PC-9 (cell line): ENCODE measurements at regions of chr14 and their contacts with region 1.

Region 1: GRCh38 chr14:75982266-75983018 is 647 bp upstream of the TGFB3 start:
- DNase-seq: peak; percentile 71 to 96
- H3K4me3 ChIP-seq: peak overlapping the region; percentile 85
- H3K27ac ChIP-seq: no peak overlapping the region
- H3K4me1 ChIP-seq: peaks cover 37% of the 10 kb centered on the region
- H3K27me3 ChIP-seq: no peaks in the 10 kb centered on the region
- CTCF ChIP-seq: peak; percentile 79

Region 2: DNA sequence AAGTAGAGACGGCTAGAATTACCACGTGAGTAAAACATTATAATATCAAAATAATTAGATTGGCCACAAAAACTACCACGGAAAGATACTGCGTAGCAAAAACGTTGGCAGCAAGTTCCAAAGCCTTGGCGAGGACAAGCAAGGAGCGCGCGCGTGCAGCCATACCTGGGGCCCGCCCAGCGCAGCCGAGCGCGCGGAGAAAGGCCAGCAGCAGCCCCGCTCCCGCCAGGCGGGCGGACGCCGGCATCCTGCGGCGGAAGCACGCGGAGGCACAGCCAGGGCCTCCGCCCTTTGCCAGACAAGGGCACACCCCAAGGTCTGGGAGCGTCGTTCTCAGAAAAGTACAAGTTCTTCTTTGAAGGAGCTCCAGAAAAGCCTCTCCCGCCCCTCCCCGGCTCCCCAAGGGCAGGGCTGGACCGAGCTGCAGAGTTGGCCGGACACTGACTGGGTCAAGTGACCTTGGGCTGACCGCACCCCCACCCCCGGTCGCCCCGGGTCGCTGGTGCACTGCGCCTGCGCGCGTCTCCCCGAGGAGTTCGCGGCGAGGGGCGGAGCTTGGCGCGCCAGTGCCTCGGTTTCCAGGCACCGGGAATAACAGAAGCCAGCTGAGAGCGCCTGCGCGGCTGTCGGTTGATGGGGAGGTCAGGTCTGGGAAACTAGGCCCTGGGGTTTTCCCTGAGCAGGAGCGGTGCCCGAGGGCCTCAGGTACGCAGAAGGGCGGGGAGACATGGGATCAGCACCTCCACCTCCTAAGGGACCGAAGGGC is 913.2 kb before region 1 on chr14 and contains the start of gene ZC2HC1C:
- CTCF ChIA-PET with region 1: interaction called, 12 read pairs
- POLR2A ChIA-PET with region 1: no interaction called
- intact Hi-C with region 1: no loop called
- DNase-seq: peak; percentile 94 to 100
- H3K4me3 ChIP-seq: peak within 1 kb of the TSS; percentile 71
- H3K27ac ChIP-seq: peak within 1 kb of the TSS; percentile 79
- H3K4me1 ChIP-seq: peaks cover 32% of the 10 kb centered on the region
- H3K27me3 ChIP-seq: no peaks in the 10 kb centered on the region
- CTCF ChIP-seq: no peak
- total RNA-seq, gene ZC2HC1C: 11.9 and 13.8 TPM in 2 replicates

Region 3: GRCh38 chr14:75487155-75487671 is 495.2 kb before region 1 on chr14:
- CTCF ChIA-PET with region 1: interaction called, 11 read pairs
- POLR2A ChIA-PET with region 1: no interaction called
- intact Hi-C with region 1: loop called (anchors 1 kb)
- DNase-seq: peak; percentile 83 to 99
- H3K4me3 ChIP-seq: no peak overlapping the region
- H3K27ac ChIP-seq: 0 out of 2 replicates have a peak overlapping the region, but pooled peaks have one; percentile 5
- H3K4me1 ChIP-seq: peaks cover 18% of the 10 kb centered on the region
- H3K27me3 ChIP-seq: no peaks in the 10 kb centered on the region
- CTCF ChIP-seq: no peak

Region 4: DNA sequence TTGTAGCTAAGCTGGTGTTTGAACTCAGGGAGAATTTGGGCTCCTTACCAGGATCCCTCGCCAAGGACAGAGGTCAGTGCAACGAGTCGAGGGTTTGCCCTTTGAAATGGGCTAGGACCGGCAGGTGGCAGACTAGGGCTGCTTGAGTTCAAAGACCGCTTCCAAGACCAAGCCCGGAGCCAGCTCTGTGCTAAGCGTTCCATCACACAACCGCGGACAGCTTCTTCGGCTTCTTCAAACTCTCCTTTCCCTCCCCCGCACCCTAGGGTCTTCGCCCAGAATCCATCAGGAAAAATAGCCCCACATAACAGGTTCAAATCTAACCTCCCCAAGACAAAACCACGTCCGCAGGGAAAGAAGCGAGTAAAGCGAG is 404.7 kb before region 1 on chr14:
- CTCF ChIA-PET with region 1: interaction called, 82 read pairs
- POLR2A ChIA-PET with region 1: interaction called, 4 read pairs
- intact Hi-C with region 1: no loop called
- DNase-seq: peak; percentile 83 to 93
- H3K4me3 ChIP-seq: peak overlapping the region; percentile 67
- H3K27ac ChIP-seq: peak overlapping the region; percentile 24
- H3K4me1 ChIP-seq: peaks cover 32% of the 10 kb centered on the region
- H3K27me3 ChIP-seq: no peaks in the 10 kb centered on the region
- CTCF ChIP-seq: peak; percentile 97

Region 5: DNA sequence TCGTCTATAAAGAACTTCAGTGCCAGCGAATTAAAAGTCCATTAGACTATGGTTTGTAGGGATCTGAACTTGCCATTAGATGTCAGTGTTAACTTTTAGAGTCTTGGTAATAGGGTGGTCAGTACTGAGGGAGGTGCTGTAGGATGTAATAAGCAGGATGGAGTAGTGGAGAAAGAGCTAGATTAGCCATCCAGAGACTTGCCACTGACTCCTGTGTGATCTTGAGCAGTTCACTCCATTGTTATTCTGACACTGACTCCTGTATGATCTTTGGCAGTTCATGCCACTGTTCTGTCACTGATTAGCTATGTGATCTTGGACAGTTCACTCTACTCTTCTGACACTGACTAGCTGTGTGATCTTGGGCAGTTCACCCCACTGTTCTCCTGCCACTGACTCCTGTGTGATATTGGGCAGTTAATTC is 187.8 kb before region 1 on chr14:
- CTCF ChIA-PET with region 1: interaction called, 24 read pairs
- POLR2A ChIA-PET with region 1: no interaction called
- intact Hi-C with region 1: loop called (anchors 1 kb)
- DNase-seq: peak in 1 of 2 experiments; percentile 11
- H3K4me3 ChIP-seq: no peak overlapping the region
- H3K27ac ChIP-seq: no peak overlapping the region
- H3K4me1 ChIP-seq: no peaks in the 10 kb centered on the region
- H3K27me3 ChIP-seq: no peaks in the 10 kb centered on the region
- CTCF ChIP-seq: peak; percentile 53

Region 6: DNA sequence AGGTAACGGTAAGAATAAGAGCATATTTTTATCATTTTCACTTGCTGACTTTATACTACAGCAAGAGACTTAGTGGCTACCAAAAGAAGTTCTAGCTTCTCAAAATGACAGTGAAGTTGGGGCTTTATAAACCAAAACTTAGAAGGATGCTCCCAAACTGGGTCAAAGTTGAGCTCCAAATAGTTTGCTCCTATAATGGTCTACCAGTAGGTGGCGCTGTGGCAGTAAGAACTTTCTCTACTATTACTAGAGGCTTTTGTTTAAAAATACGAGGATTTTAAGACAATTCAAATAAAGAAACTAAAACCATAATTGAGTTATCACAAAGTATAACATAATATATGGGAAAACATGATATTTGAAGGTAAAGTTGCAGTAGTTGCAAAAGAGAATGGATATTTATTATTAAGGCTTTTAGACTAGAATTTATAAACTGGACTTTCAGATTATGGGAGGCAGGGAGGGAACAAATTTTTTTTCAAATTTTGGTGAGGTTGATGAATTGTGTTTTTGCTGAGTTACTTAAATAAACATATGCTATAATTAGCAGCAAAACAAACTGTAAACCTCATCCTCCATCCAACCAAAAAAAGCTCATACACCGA is 75.7 kb before region 1 on chr14:
- CTCF ChIA-PET with region 1: interaction called, 24 read pairs
- POLR2A ChIA-PET with region 1: no interaction called
- intact Hi-C with region 1: loop called (anchors 1 kb)
- DNase-seq: peak; percentile 60 to 64
- H3K4me3 ChIP-seq: no peak overlapping the region
- H3K27ac ChIP-seq: no peak overlapping the region
- H3K4me1 ChIP-seq: no peaks in the 10 kb centered on the region
- H3K27me3 ChIP-seq: no peaks in the 10 kb centered on the region
- CTCF ChIP-seq: peak; percentile 100